Sigmoid colon (tissue), 7 donors: ENCODE measurements at regions of chr1 and their contacts with region 1.

Region 1: GRCh38 chr1:68120136-68120791 is 69.8 kb upstream of the DIRAS3 start:
- DNase-seq: no peak
- H3K4me3 ChIP-seq: no peak overlapping the region
- H3K27ac ChIP-seq: peak overlapping the region; percentile 67 to 75 (median 73)
- H3K4me1 ChIP-seq: peaks cover 0 to 26% (median 15%) of the 10 kb centered on the region in 4 donors
- H3K27me3 ChIP-seq: no peaks in the 10 kb centered on the region
- CTCF ChIP-seq: peak; percentile 48 to 87 (median 84)
- EP300 ChIP-seq: no peak
- POLR2A ChIP-seq: no peak

Region 2: DNA sequence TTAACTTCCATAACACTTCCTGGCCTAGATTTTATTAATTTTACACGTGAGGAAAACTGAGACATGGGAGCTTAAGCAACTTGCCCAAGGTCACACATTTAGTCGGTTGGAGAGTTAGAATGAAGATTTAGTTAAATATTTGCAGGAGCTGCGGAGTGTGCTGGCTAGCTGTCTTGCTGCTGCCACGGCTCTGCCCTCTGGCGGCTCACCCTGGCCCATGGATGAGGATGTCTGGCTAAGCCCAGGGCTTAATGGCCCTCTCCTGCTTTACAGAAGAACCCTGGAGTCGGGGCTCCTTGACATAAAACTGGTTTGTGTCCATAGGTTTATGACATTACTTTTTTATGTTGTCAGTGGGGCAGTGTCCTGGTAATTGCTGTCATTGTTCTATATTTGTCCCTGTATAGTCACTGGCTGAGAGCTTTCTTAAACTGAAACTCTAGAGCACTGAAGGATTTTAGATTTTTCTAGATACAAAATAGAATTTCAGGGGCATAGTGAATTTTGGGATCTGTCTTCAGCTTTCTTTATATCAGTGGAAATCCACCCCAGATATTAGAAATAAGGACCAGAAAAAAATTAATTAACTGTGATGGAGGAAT is 200.9 kb after region 1 on chr1:
- intact Hi-C with region 1: loop called (anchors 1 kb)
- DNase-seq: peak; percentile 87
- H3K4me3 ChIP-seq: no peak overlapping the region
- H3K27ac ChIP-seq: peak overlapping the region; percentile 70 to 82 (median 78)
- H3K4me1 ChIP-seq: peaks cover 0 to 47% (median 23%) of the 10 kb centered on the region in 4 donors
- H3K27me3 ChIP-seq: no peaks in the 10 kb centered on the region
- CTCF ChIP-seq: peak; percentile 22 to 81 (median 76)
- EP300 ChIP-seq: no peak
- POLR2A ChIP-seq: no peak

Region 3: GRCh38 chr1:68496680-68497357 is 376.6 kb after region 1 on chr1 and contains the start of gene DEPDC1:
- intact Hi-C with region 1: loop called (anchors 10 kb)
- DNase-seq: peak; percentile 97
- H3K4me3 ChIP-seq: peak within 1 kb of the TSS; percentile 33 to 66 (median 56)
- H3K27ac ChIP-seq: peak within 1 kb of the TSS in 2 of 4 donors; percentile 38 to 55
- H3K4me1 ChIP-seq: peaks cover 0 to 18% (median 14%) of the 10 kb centered on the region in 4 donors
- H3K27me3 ChIP-seq: no peaks in the 10 kb centered on the region
- CTCF ChIP-seq: no peak
- EP300 ChIP-seq: no peak
- POLR2A ChIP-seq: no peak
- total RNA-seq, gene DEPDC1: 0.28 to 1.2 (median 1.1) TPM in 3 of 4 donors, not detected in the other

Region 4: DNA sequence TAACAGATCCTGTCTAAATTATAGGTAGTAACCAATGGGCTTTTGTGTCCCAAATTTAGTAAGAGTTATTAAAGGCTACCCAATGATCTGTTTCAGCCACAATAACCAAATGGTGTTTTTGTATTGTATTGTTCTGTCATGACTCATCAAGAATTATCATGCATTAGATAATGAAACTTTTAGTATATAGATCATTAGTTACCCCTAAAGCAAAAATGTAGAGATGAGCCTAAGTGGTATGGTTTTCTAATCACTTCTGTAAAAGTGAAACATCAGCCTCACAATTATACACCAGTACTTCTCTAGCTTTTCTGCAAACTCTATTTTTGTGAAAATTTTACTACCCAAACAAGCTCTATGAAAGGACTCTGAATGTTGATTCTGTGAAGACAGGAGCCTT is 1518.9 kb after region 1 on chr1:
- intact Hi-C with region 1: no loop called
- DNase-seq: no peak
- H3K4me3 ChIP-seq: no peak overlapping the region
- H3K27ac ChIP-seq: no peak overlapping the region
- H3K4me1 ChIP-seq: no peaks in the 10 kb centered on the region
- H3K27me3 ChIP-seq: no peaks in the 10 kb centered on the region
- CTCF ChIP-seq: no peak
- EP300 ChIP-seq: no peak
- POLR2A ChIP-seq: no peak